ENCODE measurements at regions of chr4 and their contacts with region 1.

Region 1: GRCh38 chr4:38509551-38509950 is 154.4 kb upstream of the KLF3 start:
- DNase-seq: peak; percentile 62
- H3K4me3 Mint-ChIP-seq: peak overlapping the region; percentile 53
- H3K27ac Mint-ChIP-seq: no peak overlapping the region
- H3K4me1 Mint-ChIP-seq: peaks cover 86% of the 10 kb centered on the region
- H3K27me3 Mint-ChIP-seq: no peaks in the 10 kb centered on the region

Region 2: GRCh38 chr4:38069271-38069760 is 440.2 kb before region 1 on chr4:
- CTCF ChIA-PET with region 1: no interaction called
- intact Hi-C with region 1: loop called (anchors 5 kb)
- DNase-seq: peak; percentile 80
- H3K4me3 Mint-ChIP-seq: no peak overlapping the region
- H3K27ac Mint-ChIP-seq: no peak overlapping the region
- H3K4me1 Mint-ChIP-seq: peaks cover 17% of the 10 kb centered on the region
- H3K27me3 Mint-ChIP-seq: no peaks in the 10 kb centered on the region

Region 3: DNA sequence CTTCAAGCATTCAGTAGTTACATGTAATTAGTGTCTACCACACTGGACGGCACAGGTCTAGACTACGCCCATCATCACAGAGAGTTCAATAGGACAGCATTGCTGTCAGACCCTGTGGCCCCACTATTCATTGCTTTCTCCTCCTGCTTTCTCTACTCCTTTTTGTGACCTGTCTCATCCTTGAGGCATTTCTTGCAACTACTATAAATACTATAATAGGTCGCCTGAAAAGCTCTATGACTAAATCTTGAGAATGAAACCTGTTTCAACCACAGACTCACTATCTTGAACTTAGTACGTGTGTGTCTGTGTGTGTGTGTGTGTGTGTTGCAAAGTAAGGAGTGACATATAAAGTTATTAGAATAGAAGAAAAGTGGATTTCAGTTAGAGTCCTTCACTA is 98.5 kb before region 1 on chr4:
- CTCF ChIA-PET with region 1: no interaction called
- intact Hi-C with region 1: loop called (anchors 5 kb)
- DNase-seq: peak; percentile 44
- H3K4me3 Mint-ChIP-seq: no peak overlapping the region
- H3K27ac Mint-ChIP-seq: no peak overlapping the region
- H3K4me1 Mint-ChIP-seq: peaks cover 13% of the 10 kb centered on the region
- H3K27me3 Mint-ChIP-seq: no peaks in the 10 kb centered on the region

Measured in activated naive CD4-positive, alpha-beta T cell treated with anti-CD3 and anti-CD28 coated beads for 36 hours (primary cell).